Common myeloid progenitor, CD34-positive (primary cell): ENCODE measurements at regions of chr13 and their contacts with region 1.

Region 1: GRCh38 chr13:20924758-20925394 is 22.3 kb upstream of the XPO4 start:
- DNase-seq: peak; percentile 86 to 95 (median 93)
- H3K4me3 ChIP-seq: no peak overlapping the region
- H3K27ac ChIP-seq: no peak overlapping the region
- H3K4me1 ChIP-seq: peaks cover 0 to 4% (median 0%) of the 10 kb centered on the region in 4 experiments
- H3K27me3 ChIP-seq: no peaks in the 10 kb centered on the region

Region 2: GRCh38 chr13:20495082-20496023 is 429.5 kb before region 1 on chr13:
- CTCF ChIA-PET with region 1: interaction called, 19 read pairs
- POLR2A ChIA-PET with region 1: no interaction called
- DNase-seq: peak; percentile 81 to 92 (median 90)
- H3K4me3 ChIP-seq: peak overlapping the region in 5 of 7 experiments; percentile 29 to 65 (median 59)
- H3K27ac ChIP-seq: peak overlapping the region; percentile 72 to 87
- H3K4me1 ChIP-seq: peaks cover 0 to 21% (median 16%) of the 10 kb centered on the region in 4 experiments
- H3K27me3 ChIP-seq: no peaks in the 10 kb centered on the region

Region 3: GRCh38 chr13:20877902-20878301 is 47.0 kb before region 1 on chr13:
- CTCF ChIA-PET with region 1: interaction called, 12 read pairs
- POLR2A ChIA-PET with region 1: no interaction called
- DNase-seq: peak in 1 of 3 donors; percentile 12
- H3K4me3 ChIP-seq: no peak overlapping the region
- H3K27ac ChIP-seq: no peak overlapping the region
- H3K4me1 ChIP-seq: peaks cover 0 to 8% (median 3%) of the 10 kb centered on the region in 4 experiments
- H3K27me3 ChIP-seq: no peaks in the 10 kb centered on the region

Region 4: DNA sequence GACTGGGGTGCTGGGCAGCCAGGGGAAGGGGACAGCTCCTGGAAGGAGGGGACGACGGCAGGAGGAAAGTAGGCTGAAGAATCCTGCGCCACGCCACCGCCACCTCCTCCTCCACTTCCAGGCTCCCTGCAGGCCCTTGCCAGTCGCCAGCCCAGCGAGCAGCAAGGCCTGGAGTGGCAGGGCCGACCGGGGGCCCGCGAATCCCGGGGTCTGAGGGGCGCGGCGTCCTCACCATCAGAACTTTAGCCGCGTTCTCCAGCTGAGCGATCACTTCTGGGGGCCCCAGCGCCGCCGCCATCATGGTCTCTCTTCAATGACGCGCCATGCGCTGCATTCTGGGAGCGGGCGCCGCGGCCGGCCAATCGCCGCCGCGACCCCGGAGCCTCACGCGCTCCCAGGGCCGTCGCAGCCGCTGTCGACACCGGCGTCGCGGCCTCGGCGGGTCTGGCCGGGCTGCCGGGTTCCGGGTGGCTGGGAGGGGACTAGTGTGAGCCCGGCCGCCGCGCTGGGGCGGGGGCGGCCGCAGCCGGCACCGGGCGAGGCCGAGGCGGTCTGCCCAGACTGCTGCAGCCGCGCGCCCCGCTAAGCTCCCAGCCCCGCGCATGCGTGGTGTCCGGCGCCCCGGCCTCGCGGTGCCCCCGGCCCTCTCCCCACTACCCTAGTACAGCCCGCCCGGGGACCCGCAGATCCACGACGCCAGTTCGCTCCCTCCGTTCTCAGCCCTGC is 22.3 kb before region 1 on chr13 and contains the start of gene XPO4:
- CTCF ChIA-PET with region 1: interaction called, 11 read pairs
- POLR2A ChIA-PET with region 1: interaction called, 3 read pairs
- DNase-seq: peak; percentile 74 to 91 (median 90)
- H3K4me3 ChIP-seq: peak within 1 kb of the TSS; percentile 89 to 99 (median 95)
- H3K27ac ChIP-seq: peak within 1 kb of the TSS; percentile 91 to 96
- H3K4me1 ChIP-seq: peaks cover 6 to 17% (median 13%) of the 10 kb centered on the region in 4 experiments
- H3K27me3 ChIP-seq: no peaks in the 10 kb centered on the region

Region 5: DNA sequence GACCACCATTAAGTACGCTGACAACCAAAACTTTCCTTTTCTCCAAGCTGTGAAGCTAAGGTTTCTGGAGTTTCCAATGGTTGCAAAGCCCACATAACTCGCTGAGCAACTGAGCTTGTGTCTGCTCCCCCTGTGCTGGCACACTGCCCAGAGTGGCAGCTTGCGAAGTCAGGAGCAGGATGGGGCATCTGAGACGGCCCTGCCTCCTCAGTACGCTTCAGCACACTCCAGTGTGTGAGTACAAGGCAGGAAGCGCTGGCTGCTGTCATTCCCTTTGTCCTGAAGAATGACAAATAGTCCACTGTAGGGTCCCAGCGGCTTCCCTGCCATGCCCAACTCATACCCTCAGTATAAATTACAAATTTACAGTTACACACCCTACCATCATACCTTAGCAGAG is 200.0 kb after region 1 on chr13:
- CTCF ChIA-PET with region 1: no interaction called
- POLR2A ChIA-PET with region 1: no interaction called
- DNase-seq: peak; percentile 16 to 72 (median 67)
- H3K4me3 ChIP-seq: no peak overlapping the region
- H3K27ac ChIP-seq: no peak overlapping the region
- H3K4me1 ChIP-seq: peaks cover 0 to 4% (median 2%) of the 10 kb centered on the region in 4 experiments
- H3K27me3 ChIP-seq: no peaks in the 10 kb centered on the region